ENCODE measurements at regions of chr6 and their contacts with region 1.

Region 1: DNA sequence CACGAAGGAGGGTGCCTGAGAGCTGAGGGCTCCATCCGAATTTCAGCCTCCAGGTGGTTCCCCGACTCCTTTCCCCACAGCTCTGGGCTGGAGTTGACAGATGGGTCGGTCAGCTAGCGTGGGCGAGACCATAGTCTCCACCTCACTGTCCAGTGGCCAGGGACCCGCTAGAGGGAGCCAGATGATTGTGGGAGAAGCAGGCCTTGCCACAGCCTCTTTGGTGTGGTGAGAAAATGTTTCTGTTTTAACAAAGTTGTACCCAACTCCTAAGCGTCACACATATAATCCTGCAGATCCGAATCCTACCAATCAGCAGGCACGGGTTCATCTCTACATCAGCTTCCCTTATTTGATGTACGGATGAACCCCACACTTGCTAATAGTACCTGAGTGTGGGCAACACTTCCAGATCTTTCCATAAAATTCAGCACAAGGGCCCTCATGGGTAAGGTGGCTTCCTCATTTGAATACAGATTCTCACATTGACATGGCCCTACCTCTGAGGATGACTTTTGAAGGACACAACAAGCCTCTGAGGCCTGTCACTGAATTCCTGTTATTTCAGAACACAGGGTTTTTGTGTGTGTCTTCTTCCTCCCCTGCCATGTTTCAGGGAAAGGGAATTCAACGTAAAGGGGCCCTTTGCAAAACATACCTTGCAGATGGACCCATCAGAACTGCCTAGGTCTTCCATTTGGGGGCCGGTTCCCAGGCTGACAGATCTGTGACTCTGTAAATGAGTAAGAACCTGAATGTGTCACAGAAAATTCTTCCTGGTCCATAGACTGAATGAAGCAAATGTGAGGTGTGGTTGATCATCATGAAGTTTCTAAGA is 103.2 kb upstream of the DUSP22 start:
- DNase-seq: peak; percentile 93
- ATAC-seq: peak; percentile 73
- H3K4me3 Mint-ChIP-seq: peak overlapping the region; percentile 9
- H3K27ac Mint-ChIP-seq: peak overlapping the region; percentile 92
- H3K4me1 Mint-ChIP-seq: peaks cover 51% of the 10 kb centered on the region
- H3K27me3 Mint-ChIP-seq: no peaks in the 10 kb centered on the region
- CTCF ChIP-seq: peak; percentile 93

Region 2: DNA sequence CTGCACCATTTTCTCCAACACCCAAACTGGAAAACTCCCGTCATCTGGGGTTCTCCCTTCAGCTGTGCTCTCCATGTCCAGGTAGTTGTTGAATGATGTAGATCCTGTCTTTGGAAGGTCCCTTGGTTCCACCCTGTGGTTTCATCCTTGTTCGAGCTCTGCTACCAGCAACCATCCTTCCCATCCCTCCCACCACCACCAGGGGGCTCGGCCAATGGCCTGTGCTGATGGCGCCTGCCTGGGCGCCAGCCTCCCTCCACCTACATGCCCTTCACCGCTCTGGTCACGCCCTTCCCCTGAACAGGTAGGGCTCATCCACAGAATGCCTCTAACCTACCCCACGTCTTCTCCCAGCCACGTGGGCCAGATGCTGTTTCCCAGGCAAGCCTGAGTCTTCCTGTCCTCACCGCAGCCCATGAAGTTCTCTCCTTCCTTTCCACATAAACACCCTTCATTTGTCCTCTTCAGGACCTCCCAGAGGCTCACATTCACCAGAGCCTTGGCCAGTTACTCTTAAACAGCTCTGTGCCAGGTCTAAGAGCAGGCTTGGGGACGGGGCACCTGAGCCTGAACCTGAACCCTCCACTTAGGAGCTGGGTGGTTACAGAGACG is 28.1 kb after region 1 on chr6:
- CTCF ChIA-PET with region 1: interaction called, 22 read pairs
- POLR2A ChIA-PET with region 1: interaction called, 6 read pairs
- intact Hi-C with region 1: no loop called
- DNase-seq: peak; percentile 48
- ATAC-seq: no peak
- H3K4me3 Mint-ChIP-seq: no peak overlapping the region
- H3K27ac Mint-ChIP-seq: no peak overlapping the region
- H3K4me1 Mint-ChIP-seq: peaks cover 48% of the 10 kb centered on the region
- H3K27me3 Mint-ChIP-seq: no peaks in the 10 kb centered on the region
- CTCF ChIP-seq: peak; percentile 59

Region 3: DNA sequence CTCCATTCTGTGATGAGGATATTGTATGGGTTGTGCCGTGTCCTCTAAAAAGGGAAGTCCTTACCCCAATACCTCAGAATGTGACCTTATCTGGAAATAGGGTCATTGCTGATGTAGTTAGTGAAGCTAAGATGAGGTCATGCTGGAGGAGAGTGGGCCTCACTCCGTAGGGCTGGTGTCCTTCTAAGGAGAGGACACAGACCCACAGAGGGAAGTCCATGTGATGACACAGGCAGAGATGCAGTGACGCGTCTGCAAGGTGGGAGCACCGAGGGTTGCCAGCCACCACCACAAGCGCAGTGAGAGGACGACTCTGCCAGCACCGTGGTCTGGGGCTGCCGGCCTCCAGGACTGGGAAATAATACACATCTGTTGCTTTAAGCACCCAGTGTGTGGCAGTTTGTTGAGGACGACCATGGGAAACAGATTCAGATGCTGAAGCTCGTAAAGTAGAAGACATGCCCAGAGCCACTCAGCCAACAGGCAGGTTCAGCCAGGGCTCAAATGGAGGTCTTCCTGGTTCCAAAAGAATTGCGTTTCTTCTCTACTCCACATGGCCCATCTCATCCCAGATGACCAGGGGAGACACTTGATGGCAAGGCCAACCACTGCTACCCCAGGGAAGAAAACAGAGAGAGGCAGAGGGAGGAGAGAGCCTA is 44.1 kb after region 1 on chr6:
- CTCF ChIA-PET with region 1: interaction called, 10 read pairs
- POLR2A ChIA-PET with region 1: interaction called, 5 read pairs
- intact Hi-C with region 1: no loop called
- DNase-seq: no peak
- ATAC-seq: no peak
- H3K4me3 Mint-ChIP-seq: no peak overlapping the region
- H3K27ac Mint-ChIP-seq: no peak overlapping the region
- H3K4me1 Mint-ChIP-seq: peaks cover 68% of the 10 kb centered on the region
- H3K27me3 Mint-ChIP-seq: peaks cover 1% of the 10 kb centered on the region
- CTCF ChIP-seq: no peak

Region 4: DNA sequence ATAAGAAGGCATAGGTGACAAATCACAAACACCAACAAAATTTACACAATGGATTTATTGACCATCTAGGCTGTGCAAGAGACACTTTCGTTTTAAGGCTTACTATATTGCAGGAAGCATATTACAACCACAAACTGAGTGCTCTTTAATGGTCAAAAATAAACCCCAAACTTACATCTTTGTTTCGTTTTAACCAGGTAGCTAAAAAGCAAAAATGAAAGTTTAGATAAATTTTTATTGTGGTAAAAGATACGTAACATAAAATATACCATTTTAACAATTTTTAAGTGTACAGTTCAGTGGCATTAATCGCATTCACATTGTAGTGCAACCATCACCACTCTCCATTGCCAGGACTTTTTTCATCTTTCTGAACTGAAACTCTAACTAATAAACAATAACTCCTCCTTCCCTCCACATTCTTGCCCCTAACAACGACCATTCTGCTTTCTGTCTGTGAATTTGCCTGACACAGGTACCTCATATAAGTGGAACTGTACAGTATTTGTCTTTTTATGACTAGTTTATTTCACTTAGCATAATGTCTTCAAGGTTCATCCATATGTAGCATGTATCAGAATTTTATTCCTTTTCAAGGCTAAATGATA is 71.0 kb after region 1 on chr6:
- CTCF ChIA-PET with region 1: no interaction called
- POLR2A ChIA-PET with region 1: no interaction called
- intact Hi-C with region 1: no loop called
- DNase-seq: no peak
- ATAC-seq: peak; percentile 60
- H3K4me3 Mint-ChIP-seq: peak overlapping the region; percentile 36
- H3K27ac Mint-ChIP-seq: peak overlapping the region; percentile 43
- H3K4me1 Mint-ChIP-seq: peaks cover 38% of the 10 kb centered on the region
- H3K27me3 Mint-ChIP-seq: no peaks in the 10 kb centered on the region
- CTCF ChIP-seq: no peak

Region 5: GRCh38 chr6:336159-337019 is 147.4 kb after region 1 on chr6:
- CTCF ChIA-PET with region 1: interaction called, 4 read pairs
- POLR2A ChIA-PET with region 1: interaction called, 14 read pairs
- intact Hi-C with region 1: loop called (anchors 2 kb)
- DNase-seq: peak; percentile 28
- ATAC-seq: peak; percentile 8
- H3K4me3 Mint-ChIP-seq: peak overlapping the region; percentile 9
- H3K27ac Mint-ChIP-seq: peak overlapping the region; percentile 90
- H3K4me1 Mint-ChIP-seq: peaks cover 58% of the 10 kb centered on the region
- H3K27me3 Mint-ChIP-seq: no peaks in the 10 kb centered on the region
- CTCF ChIP-seq: no peak

Region 6: DNA sequence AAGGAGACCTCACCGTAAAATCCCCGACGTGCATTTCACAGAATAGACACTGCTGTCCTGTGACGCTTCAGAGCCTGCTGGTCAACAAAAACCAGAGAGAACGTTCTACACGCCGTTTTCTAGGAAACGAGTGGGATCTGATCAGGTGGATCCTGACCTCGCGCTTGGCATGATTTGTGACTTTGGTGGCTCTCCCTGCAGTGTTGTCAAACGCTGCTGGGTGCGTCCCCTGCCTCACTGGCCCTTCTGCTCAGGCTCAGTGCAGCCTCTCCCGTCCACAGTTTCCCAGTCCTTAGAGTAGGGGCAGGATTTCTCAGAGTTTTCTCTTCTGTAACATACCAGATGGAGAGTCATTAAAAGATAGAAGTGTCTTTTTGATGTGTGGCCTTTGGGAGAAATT is 174.9 kb after region 1 on chr6:
- CTCF ChIA-PET with region 1: no interaction called
- POLR2A ChIA-PET with region 1: no interaction called
- intact Hi-C with region 1: no loop called
- DNase-seq: no peak
- ATAC-seq: no peak
- H3K4me3 Mint-ChIP-seq: no peak overlapping the region
- H3K27ac Mint-ChIP-seq: no peak overlapping the region
- H3K4me1 Mint-ChIP-seq: no peaks in the 10 kb centered on the region
- H3K27me3 Mint-ChIP-seq: peaks cover 3% of the 10 kb centered on the region
- CTCF ChIP-seq: no peak

Region 7: DNA sequence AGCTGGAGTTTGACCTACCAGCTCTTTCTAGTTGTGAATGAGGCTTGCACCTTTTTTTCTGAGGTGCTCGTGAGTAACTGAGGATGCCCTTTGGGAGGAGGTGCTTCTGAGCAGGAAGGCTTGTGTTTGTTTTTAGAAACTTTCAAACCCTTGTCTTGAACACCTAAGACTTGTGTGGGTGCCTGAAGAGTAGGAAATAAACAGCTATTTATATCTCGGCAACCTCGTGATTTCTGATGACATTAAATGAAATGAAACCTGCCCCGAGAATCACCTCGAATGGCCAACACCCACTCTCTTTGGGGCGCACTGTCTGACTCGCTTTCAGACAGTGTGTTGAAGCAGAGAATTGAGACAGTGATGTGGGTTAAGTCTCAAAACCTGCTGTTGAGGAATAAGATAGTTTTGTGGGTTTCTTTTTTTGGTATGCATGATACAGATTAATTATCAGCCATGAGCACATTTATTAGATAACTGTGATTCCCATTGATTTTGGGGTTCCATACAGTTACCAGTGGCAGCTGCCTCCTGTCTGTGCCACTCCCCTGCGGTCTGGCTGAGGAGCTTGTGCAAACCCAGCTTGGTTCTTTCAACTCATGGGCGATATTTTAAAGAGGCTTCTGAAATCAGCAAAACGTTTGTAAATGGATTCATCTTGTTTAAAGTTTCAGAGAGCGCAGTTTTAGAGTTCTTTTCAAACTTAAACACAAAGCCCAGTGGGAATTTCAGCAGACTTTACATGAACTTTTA is 210.9 kb after region 1 on chr6:
- CTCF ChIA-PET with region 1: interaction called, 20 read pairs
- POLR2A ChIA-PET with region 1: interaction called, 116 read pairs
- intact Hi-C with region 1: no loop called
- DNase-seq: peak; percentile 84
- ATAC-seq: peak; percentile 48
- H3K4me3 Mint-ChIP-seq: peak overlapping the region; percentile 64
- H3K27ac Mint-ChIP-seq: peak overlapping the region; percentile 88
- H3K4me1 Mint-ChIP-seq: peaks cover 91% of the 10 kb centered on the region
- H3K27me3 Mint-ChIP-seq: no peaks in the 10 kb centered on the region
- CTCF ChIP-seq: no peak

Measured in activated CD8-positive, alpha-beta T cell treated with anti-CD3 and anti-CD28 coated beads for 36 hours (primary cell).